Psoas muscle (tissue), 8 donors: ENCODE measurements at regions of chr4 and their contacts with region 1.

Region 1: GRCh38 chr4:2767705-2768074 is 11.6 kb upstream of the TNIP2 start:
- DNase-seq: peak in 1 of 2 donors; percentile 43
- ATAC-seq: no peak
- H3K4me3 ChIP-seq: no peak overlapping the region
- H3K27ac ChIP-seq: no peak overlapping the region
- H3K4me1 ChIP-seq: peaks cover 5% of the 10 kb centered on the region
- H3K27me3 ChIP-seq: no peaks in the 10 kb centered on the region
- CTCF ChIP-seq: no peak

Region 2: GRCh38 chr4:2811830-2812611 is 44.3 kb after region 1 on chr4:
- intact Hi-C with region 1: loop called in 1 of 2 experiments (anchors 5 kb)
- DNase-seq: peak; percentile 76 to 88
- ATAC-seq: peak; percentile 88 to 90 (median 88)
- H3K4me3 ChIP-seq: peak overlapping the region; percentile 78
- H3K27ac ChIP-seq: peak overlapping the region; percentile 87
- H3K4me1 ChIP-seq: peaks cover 49% of the 10 kb centered on the region
- H3K27me3 ChIP-seq: no peaks in the 10 kb centered on the region
- CTCF ChIP-seq: no peak